ENCODE measurements at regions of chr14 and their contacts with region 1.

Region 1: DNA sequence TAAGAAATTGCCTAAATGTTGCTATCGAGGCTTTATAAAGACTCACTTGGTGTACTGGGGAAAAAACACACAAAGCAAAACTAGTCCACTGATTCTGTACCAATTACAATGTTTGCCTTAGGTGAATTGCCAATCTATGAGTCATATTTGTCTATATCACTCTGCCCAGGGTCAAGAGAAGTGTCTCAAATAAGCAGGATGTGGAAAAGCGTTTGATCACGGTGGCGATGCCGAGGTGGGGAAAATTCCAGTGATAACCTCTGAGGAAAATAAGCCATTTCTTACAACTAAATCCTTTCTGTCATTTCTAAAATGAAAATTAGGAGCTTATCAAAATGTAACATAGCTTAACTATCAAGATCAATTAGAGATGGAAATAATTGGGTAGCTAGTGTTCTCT is 148.6 kb upstream of the DIO3 start:
- DNase-seq: no peak
- H3K4me3 ChIP-seq: no peak overlapping the region
- H3K27ac ChIP-seq: no peak overlapping the region
- H3K4me1 ChIP-seq: peaks cover 4 to 5% of the 10 kb centered on the region in 2 donors
- H3K27me3 ChIP-seq: no peaks in the 10 kb centered on the region
- CTCF ChIP-seq: no peak
- POLR2A ChIP-seq: no peak

Region 2: DNA sequence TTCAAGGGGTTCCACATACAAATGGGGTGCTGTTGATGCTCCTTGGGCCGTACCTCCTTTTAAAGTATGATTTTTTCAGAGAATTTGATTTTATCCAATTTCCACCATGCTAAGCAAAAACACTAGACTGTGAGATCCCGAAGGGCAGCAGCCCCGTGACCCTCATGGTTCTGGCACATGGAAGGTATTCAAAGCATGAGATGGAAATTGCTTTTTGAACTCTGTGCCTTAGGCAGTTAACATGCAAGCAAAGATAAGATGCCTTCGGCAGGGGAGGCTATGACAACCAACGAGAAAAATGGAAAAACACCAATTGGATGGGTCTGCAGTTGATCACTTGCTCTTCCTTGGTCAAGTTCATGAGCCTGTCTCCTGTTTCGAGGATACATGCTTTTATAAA is 27.8 kb after region 1 on chr14:
- intact Hi-C with region 1: loop called (anchors 2 kb)
- DNase-seq: no peak
- H3K4me3 ChIP-seq: no peak overlapping the region
- H3K27ac ChIP-seq: no peak overlapping the region
- H3K4me1 ChIP-seq: no peaks in the 10 kb centered on the region
- H3K27me3 ChIP-seq: no peaks in the 10 kb centered on the region
- CTCF ChIP-seq: no peak
- POLR2A ChIP-seq: no peak

Region 3: DNA sequence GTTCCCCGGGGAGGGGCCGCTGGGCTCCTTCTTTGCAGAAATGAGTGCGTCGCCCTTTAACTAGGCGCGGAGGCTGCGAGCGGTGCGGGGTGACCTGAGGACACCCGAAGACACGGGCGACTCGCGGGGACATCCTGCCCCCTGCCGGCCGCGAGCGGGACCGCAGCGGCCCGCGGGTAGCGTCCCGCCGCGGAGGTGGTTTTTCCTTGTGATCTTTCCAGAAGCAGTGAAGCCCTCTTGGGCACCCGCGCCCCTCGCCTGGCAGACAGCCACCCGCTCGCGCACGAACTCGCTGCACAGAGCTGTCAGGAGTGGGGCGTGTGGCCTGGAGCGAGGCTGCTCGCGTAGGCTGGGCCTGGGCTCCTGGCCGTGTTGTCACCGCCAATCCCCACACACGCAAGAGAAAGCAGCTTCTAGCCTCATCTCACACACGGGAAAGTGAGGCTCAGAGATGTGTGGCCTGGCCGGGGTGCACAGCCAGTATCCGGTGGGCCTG is 215.8 kb after region 1 on chr14:
- intact Hi-C with region 1: no loop called
- DNase-seq: peak; percentile 66 to 83
- H3K4me3 ChIP-seq: no peak overlapping the region
- H3K27ac ChIP-seq: no peak overlapping the region
- H3K4me1 ChIP-seq: no peaks in the 10 kb centered on the region
- H3K27me3 ChIP-seq: no peaks in the 10 kb centered on the region
- CTCF ChIP-seq: peak; percentile 97 to 100 (median 98)
- POLR2A ChIP-seq: peak in 1 of 2 donors; percentile 17